CD14-positive monocyte (primary cell): ENCODE measurements at regions of chr10 and their contacts with region 1.

Region 1: GRCh38 chr10:124259139-124259825 is 159.4 kb downstream of the OAT start:
- DNase-seq: peak; percentile 52 to 73 (median 62)
- H3K4me3 ChIP-seq: no peak overlapping the region
- H3K4me3 Mint-ChIP-seq: no peak overlapping the region
- H3K27ac ChIP-seq: peak overlapping the region in 1 of 2 donors; percentile 43
- H3K27ac Mint-ChIP-seq: peak overlapping the region in 2 of 7 donors; percentile 9 to 21
- H3K4me1 ChIP-seq: peaks cover 15 to 24% of the 10 kb centered on the region in 2 donors
- H3K4me1 Mint-ChIP-seq: peaks cover 29% of the 10 kb centered on the region
- H3K27me3 ChIP-seq: no peaks in the 10 kb centered on the region
- H3K27me3 Mint-ChIP-seq: peaks cover 3 to 6% (median 6%) of the 10 kb centered on the region in 3 donors
- CTCF ChIP-seq: peak; percentile 52

Region 2: DNA sequence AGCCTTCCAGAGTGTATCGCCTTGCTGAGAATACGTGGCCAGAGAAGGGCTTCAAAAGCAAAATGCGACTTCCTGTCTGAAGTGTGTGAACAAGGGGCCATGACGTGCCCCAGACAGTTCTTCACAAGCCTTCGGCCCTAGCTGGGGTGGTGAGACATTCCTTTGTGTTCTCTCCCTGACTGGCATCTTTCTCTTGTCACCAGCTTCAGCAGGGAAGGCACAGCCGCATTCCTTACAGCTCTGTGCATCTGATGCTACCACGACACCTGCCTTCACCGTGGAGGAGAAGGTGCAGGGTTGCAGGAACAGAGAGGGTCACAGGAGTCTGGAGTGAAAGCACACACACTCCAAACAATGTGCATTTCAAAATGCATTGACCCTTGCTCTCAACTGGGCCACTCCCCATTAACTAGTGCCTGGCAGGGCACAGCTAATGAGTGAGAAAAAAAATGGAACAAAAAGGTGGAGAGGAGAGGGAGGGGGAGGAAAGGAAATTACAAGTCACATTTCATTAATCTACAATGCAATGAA is 499.7 kb before region 1 on chr10:
- intact Hi-C with region 1: no loop called
- DNase-seq: no peak
- H3K4me3 ChIP-seq: no peak overlapping the region
- H3K4me3 Mint-ChIP-seq: no peak overlapping the region
- H3K27ac ChIP-seq: no peak overlapping the region
- H3K27ac Mint-ChIP-seq: no peak overlapping the region
- H3K4me1 ChIP-seq: no peaks in the 10 kb centered on the region
- H3K4me1 Mint-ChIP-seq: no peaks in the 10 kb centered on the region
- H3K27me3 ChIP-seq: peaks cover 0 to 7% of the 10 kb centered on the region in 2 donors
- H3K27me3 Mint-ChIP-seq: peaks cover 14 to 19% (median 16%) of the 10 kb centered on the region in 3 donors
- CTCF ChIP-seq: no peak

Region 3: DNA sequence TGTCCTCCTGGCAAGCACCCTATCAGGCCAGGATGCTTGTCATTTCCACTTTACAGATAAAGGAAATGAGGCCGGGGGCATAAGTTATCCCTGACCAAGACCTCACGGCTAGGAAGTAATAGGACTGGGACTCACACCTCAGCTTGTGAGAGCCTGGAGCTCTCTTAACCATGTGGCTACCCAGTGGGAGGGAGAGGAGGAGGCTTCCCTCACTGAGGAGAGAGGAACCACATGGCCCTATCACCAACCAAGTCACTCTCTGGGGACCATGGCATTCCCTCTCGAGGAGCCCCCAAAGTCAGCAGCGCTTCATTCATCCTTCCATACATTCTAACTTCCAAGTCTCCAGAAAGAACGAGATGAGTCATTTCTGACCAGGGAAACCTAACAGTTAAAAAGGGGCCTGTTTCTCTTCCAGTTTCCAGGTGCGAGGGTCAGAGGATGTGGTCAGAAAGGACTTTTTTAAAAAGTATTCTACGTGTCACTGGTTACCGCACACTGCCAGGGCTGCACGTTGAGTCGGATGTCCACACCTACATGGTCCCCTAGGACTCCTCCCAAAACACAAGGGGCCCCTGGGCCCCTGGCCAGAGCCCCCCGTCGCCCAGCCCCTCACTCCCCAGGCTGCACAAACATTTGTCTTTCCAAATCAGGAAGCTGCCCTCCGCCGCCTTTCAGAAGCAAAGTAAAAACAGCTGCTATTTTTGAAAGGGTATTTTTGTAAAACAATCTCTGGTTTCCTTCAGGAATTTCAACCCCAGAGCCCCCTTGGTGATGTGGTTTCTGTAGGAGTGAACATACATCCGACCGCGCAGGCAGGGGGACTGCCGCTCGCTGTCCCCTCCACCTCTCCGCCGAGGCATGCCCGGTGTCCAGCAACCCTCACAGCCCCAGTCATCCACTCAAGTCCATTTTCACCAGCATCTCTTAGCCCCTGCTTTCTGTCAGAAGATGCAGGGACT is 37.6 kb before region 1 on chr10:
- intact Hi-C with region 1: loop called in 1 of 2 experiments (anchors 5 kb)
- DNase-seq: no peak
- H3K4me3 ChIP-seq: no peak overlapping the region
- H3K4me3 Mint-ChIP-seq: peak overlapping the region; percentile 34 to 71
- H3K27ac ChIP-seq: no peak overlapping the region
- H3K27ac Mint-ChIP-seq: no peak overlapping the region
- H3K4me1 ChIP-seq: peaks cover 32 to 38% of the 10 kb centered on the region in 2 donors
- H3K4me1 Mint-ChIP-seq: peaks cover 34% of the 10 kb centered on the region
- H3K27me3 ChIP-seq: peaks cover 0 to 29% of the 10 kb centered on the region in 2 donors
- H3K27me3 Mint-ChIP-seq: peaks cover 16 to 24% (median 17%) of the 10 kb centered on the region in 3 donors
- CTCF ChIP-seq: no peak